Left cardiac atrium (tissue), 4 donors: ENCODE measurements at regions of chr11 and their contacts with region 1.

Region 1: DNA sequence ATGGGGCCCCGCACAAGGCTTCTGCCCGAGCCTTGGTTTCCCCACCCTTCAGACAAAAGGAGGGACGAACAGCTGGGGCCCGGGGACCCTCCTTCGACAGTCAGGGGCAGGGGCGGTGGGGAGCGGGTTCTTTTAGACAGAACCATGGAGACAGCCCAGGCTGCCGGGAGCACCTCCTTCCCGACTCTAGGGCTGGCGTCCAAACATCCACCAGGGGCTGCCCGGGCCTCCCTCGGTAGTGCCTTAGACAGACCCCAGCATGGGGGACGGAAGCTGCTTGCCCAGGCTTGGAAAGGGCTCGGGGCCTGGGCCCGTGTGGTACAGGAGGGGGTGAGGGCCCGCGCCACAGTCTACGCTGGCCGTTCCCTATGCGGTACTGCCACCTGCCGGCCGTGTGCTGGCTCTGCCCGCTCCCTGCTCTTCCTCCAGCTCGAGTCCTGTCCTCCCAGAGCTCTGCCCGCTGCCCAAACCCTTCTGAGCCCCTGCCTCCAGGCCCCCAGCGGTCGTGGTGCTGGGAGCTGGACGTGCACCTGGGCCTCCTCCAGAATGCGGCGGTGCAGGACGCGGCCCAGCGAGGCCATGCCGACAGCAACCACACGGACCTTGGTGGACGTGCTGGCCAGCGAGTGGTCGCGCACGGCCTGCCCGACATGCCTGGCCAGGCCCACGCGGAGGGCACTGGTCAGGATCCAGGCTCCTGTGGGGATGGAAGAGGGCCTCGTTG is 20.1 kb downstream of the TSSC4 start:
- DNase-seq: peak; percentile 74
- ATAC-seq: peak; percentile 95

Region 2: DNA sequence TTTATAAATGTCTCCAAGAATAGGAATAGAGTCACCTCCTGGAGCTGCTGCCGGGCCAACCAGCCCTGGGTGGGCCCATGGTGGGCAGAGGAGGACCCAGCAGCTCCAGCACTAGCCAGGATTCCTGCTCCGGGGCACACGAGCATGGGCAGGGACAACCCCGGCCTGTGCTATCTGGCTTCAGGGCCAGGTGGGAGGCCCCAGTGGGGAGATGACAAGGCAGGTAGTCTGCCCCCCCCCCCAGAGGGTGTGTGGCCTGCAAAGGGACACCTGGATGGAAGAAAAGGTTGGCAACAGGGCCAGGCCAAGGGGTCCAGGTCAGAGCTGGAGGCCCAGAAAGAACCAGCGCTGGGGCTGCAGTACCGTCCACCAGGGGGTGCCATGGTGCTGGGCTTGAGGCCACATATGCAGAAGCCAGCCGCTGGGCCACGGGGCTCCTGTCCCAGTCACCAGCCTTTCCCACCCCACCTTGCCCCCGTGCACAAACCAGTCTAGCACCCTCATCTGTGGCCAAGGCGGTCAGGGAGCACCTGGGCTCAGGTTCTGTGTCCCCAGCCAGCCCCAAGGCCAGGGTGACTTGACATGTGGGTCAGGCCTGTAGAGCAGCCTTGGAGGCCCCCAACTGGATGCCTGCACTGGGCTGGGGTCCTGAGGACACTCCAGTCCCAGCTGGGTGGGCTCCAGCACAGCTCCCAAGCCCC is 115.4 kb before region 1 on chr11:
- intact Hi-C with region 1: loop called (anchors 1 to 2 kb)
- DNase-seq: peak; percentile 93
- ATAC-seq: peak; percentile 52 to 55

Region 3: GRCh38 chr11:2366261-2366660 is 54.4 kb before region 1 on chr11:
- intact Hi-C with region 1: loop called in 1 of 2 experiments (anchors 10 kb)
- DNase-seq: peak; percentile 42
- ATAC-seq: peak in 1 of 2 donors; percentile 55